Uterus (tissue), 4 donors: ENCODE measurements at regions of chr9 and their contacts with region 1.

Region 1: DNA sequence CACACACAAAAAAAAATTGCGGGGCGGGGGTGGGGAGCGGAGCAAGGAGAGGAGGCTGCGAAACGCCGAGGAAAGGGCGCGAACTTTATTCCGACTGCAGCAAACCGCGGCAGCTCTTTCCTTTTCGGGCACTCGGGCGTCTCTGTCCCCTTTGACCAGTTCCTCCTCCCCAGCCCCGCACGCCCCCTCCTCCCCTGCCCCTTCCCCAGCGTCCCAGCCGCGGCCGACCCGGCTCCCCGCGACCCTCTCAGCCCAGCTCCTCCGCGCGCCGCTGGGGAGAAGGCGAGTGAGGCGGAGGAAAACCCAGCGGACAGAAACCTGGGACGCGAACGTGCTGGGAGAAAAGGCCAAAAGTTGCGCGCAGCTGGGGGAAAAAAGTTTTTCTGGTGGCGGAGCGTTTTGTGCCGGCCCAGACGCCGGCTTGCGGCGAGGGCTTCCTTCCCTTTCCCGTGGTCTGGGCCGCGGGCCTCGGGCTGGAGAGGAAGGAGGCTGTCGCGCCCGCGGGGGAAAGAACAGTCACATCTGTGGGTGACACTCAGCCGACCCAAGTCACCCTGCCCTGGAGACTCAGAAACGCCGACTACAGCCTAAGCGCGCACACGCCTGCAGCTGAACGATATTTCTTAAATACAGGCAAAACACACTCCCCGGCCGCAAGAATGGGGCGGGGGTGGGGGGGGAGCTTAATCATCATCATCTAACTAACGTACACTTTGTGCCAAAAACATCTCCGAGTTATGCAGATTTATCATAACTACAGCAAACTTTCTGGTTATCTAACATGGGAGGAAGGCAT is 1.1 kb upstream of the BNC2 start:
- DNase-seq: peak; percentile 61 to 76
- H3K4me3 ChIP-seq: peak overlapping the region; percentile 69 to 97
- H3K27ac ChIP-seq: peak overlapping the region; percentile 96 to 99
- H3K4me1 ChIP-seq: no peaks in the 10 kb centered on the region
- H3K27me3 ChIP-seq: no peaks in the 10 kb centered on the region
- CTCF ChIP-seq: peak in 1 of 4 experiments; percentile 12
- POLR2A ChIP-seq: peak in 1 of 2 donors; percentile 33

Region 2: DNA sequence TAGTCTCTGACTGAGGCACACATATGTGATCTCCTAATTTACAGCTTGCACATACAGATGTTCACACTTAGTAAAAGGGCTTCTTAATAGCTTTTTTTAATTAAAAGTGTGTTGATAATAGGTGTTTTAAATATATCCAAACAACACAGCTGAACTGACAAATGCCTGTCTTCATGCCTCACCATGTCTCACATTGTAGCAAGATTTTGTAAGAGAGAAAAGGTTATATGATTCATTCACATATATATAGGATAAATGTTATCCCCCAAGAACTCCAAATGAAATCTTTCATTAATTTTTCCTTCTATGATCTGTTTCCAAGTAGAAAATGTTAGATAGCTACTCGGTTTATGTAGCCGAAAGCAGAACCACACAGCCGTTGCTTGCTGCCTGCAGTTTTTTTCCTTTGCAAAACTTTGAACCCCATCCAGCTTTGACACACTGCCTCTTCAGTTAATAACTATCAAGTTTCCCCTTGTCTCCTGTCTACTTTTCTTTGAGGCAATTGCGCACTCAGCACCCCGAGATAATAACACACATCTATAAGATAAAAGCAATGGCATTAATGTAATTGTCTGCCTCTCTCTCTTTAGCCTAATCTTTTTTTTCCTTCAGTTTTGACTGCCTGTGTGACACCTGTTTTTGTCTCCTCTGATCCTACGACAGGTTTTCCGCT is 300.3 kb before region 1 on chr9:
- intact Hi-C with region 1: loop called (anchors 5 kb)
- DNase-seq: peak in 1 of 2 donors; percentile 67
- H3K4me3 ChIP-seq: peak overlapping the region; percentile 7 to 34
- H3K27ac ChIP-seq: peak overlapping the region; percentile 69 to 77
- H3K4me1 ChIP-seq: no peaks in the 10 kb centered on the region
- H3K27me3 ChIP-seq: no peaks in the 10 kb centered on the region
- CTCF ChIP-seq: no peak
- POLR2A ChIP-seq: no peak

Region 3: GRCh38 chr9:16763946-16764345 is 107.6 kb before region 1 on chr9:
- intact Hi-C with region 1: no loop called
- DNase-seq: no peak
- H3K4me3 ChIP-seq: no peak overlapping the region
- H3K27ac ChIP-seq: no peak overlapping the region
- H3K4me1 ChIP-seq: no peaks in the 10 kb centered on the region
- H3K27me3 ChIP-seq: no peaks in the 10 kb centered on the region
- CTCF ChIP-seq: no peak
- POLR2A ChIP-seq: no peak